ENCODE measurements at regions of chr9 and their contacts with region 1.

Region 1: DNA sequence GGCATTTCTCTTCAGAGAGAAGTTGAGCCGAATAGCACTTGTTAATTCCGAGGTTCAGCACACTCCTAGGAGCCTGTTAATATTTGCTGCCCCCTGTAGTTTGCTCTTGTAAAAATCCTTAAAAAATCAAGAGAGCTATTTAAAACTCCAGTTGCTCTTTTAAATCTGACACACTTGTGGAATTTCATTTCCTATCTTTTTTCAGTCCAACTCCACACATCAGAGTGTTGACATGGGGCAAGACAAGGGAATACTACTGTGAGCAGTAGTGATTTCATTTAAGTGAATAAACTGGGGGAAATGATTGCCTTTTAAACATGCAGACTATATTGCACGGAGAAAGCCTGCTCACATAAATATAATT is 1096.3 kb upstream of the DMAC1 start:
- DNase-seq: peak in 1 of 7 donors; percentile 8
- H3K4me3 ChIP-seq: no peak overlapping the region
- H3K27ac ChIP-seq: no peak overlapping the region
- H3K4me1 ChIP-seq: no peaks in the 10 kb centered on the region
- H3K27me3 ChIP-seq: no peaks in the 10 kb centered on the region
- CTCF ChIP-seq: peak; percentile 39 to 63 (median 48)
- POLR2A ChIP-seq: no peak

Region 2: GRCh38 chr9:8961186-8961851 is 65.5 kb after region 1 on chr9:
- intact Hi-C with region 1: no loop called
- DNase-seq: peak; percentile 79 to 94 (median 87)
- H3K4me3 ChIP-seq: no peak overlapping the region
- H3K27ac ChIP-seq: peak overlapping the region; percentile 60 to 81 (median 68)
- H3K4me1 ChIP-seq: peaks cover 6 to 24% of the 10 kb centered on the region in 2 donors
- H3K27me3 ChIP-seq: no peaks in the 10 kb centered on the region
- CTCF ChIP-seq: peak in 2 of 6 experiments; percentile 23 to 26
- POLR2A ChIP-seq: no peak

Region 3: DNA sequence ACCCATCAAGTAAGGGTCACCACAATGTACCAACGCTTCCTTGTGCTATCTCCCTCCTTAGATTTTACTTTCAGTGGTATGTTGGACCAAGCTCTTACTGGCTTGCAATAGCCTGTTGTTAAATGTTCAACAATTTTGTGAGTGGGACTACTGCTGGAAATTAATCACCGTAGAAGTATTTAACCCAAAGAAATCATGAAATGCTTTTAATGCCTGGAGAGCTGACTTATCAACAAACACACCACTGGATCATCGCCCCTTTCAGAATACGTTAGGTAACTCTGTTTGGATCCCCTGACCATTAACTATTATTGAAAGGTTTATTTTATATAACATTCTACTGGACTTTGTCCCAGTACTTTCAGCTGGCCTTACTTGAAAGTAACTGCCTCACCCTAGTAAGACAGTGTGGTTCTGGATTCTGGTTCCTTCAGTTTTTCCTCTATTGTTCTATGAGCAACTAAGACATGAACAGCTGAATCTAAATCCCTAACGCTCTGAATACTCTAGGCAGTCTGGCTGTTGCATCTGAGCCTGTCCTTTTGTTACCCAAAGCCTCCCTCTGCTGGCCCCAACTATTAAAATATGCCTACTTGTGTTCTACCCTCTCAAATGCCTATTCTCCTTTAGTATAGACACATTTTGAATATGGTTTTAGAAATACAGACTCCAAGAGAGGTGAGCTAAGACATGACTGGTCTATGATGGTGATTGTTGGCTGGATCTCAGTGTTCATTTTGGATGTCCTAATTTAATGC is 107.2 kb after region 1 on chr9:
- intact Hi-C with region 1: loop called in 1 of 2 experiments (anchors 10 kb)
- DNase-seq: peak; percentile 40 to 75 (median 61)
- H3K4me3 ChIP-seq: no peak overlapping the region
- H3K27ac ChIP-seq: no peak overlapping the region
- H3K4me1 ChIP-seq: no peaks in the 10 kb centered on the region
- H3K27me3 ChIP-seq: no peaks in the 10 kb centered on the region
- CTCF ChIP-seq: peak in 5 of 6 experiments; percentile 31 to 59 (median 49)
- POLR2A ChIP-seq: no peak

Measured in adrenal gland (tissue), 19 donors.